ENCODE measurements at regions of chr3 and their contacts with region 1.

Region 1: GRCh38 chr3:71583566-71584449 is at the start of gene FOXP1:
- DNase-seq: peak; percentile 37
- H3K4me3 Mint-ChIP-seq: peak within 1 kb of the TSS; percentile 90
- H3K27ac Mint-ChIP-seq: peak within 1 kb of the TSS; percentile 93
- H3K4me1 Mint-ChIP-seq: peaks cover 47% of the 10 kb centered on the region
- H3K27me3 Mint-ChIP-seq: peaks cover 31% of the 10 kb centered on the region
- total RNA-seq, gene FOXP1: 94.8 and 97.6 TPM in 2 replicates

Region 2: DNA sequence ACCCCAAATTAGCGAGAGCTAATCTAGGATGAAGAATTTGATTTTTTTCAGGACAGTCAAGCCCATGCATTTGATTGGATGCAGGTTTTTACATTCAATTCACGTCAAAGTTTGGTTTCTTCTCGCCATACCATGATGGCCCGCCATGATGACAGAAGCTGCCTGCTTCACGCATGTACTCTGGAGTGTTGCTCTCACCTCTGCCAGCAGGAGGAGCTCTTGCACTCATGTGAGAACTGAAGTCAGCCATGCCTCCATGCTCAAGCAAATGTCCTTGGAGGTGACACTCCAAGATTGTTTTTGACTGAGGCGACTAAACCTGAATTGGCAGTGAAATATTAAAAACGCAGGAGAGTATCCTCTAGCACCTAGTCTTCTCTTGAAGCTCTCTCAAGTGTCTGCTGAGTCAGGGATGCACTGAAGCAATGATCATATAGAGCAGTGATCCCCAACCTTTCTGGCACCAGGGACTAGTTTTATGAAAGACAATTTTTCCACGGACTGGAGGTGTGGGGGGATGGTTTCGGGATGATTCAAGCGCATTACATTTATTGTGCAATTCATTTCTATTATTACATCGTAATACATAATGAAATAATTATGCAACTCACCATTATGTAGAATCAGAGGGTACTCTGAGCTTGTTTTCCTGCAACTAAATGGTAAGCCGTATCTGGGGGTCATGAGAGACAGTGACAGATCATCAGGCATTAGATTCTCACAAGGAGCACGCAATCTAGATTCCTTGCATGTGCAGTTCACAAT is 1463.3 kb before region 1 on chr3:
- intact Hi-C with region 1: loop called (anchors 2 kb)
- DNase-seq: peak; percentile 23
- H3K4me3 Mint-ChIP-seq: no peak overlapping the region
- H3K27ac Mint-ChIP-seq: no peak overlapping the region
- H3K4me1 Mint-ChIP-seq: no peaks in the 10 kb centered on the region
- H3K27me3 Mint-ChIP-seq: peaks cover 2% of the 10 kb centered on the region

Region 3: DNA sequence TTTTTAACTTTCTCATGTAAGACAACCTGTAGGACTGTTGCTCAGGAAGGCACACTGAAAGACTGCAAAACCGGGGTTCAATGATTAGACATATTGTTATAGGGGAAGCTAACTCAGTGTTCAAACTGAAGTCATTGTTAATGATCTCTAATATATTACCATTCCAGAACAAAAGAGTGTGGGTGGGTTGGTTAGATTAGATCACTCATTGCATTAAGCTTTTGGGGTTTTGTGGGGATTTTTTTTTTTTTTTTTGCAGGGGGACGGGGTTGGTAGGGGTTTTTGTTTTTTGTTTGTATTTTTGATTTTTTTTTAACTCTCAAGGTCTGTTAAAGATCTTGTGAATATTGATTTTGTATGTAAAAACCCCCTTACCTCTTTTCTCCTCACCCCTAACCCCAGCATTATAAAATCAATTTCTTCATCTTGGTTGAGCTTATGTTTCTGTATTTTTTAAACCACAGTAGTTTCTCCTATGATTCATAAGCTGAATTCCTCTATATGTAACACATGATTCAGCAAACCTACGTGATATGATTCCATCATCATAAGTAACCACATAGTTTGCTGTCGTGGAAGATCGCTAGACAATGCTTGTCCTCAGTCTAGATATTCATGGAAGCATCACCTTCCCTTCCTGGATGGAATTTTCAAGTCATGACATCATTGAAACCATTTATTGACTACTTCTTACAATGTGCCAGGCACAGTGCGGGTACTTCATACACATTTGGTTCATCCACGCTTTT is 727.2 kb before region 1 on chr3:
- intact Hi-C with region 1: loop called (anchors 5 kb)
- DNase-seq: no peak
- H3K4me3 Mint-ChIP-seq: no peak overlapping the region
- H3K27ac Mint-ChIP-seq: peak overlapping the region; percentile 49
- H3K4me1 Mint-ChIP-seq: peaks cover 22% of the 10 kb centered on the region
- H3K27me3 Mint-ChIP-seq: peaks cover 6% of the 10 kb centered on the region

Region 4: DNA sequence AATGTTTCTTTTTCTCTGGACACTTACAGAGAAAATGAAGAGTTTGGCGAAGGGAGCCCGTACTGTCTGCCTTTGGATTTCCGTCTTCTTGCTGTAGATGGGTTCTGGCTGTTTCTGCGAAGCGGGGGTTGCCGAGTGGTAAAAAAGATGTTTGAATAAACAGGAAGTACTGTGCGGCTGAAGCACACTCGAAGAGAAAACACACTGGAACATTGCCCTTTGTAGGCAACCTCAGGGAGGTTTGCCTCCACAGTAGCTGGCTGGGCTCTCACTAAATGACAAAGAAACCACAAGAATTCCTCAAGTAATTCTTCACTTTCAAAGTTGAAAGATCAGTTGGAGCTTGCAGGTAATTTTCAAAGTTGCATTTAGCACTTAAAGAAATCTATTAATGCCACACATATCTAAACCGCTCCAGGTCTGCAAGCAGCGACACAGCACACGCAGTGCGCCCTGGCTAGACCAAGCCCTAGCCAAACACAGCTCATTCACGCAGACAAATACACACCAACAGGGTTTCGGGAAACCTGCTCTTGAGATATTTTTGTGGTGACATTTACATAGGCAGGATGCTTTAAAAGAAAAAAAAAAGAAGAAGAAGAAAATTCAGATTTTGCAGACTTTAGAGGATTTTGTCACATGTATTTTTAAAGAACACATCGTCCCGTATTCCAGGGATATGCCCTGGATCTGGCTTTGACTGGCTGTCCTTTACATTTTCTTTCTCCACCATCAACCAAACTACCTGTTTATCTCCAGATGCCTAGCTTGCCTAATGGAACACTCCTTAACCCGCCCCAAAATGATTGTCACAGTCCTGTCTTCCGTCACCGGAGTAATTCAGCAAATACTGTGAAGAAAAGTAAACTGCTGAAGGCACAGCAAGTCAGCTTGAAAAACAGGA is 453.1 kb before region 1 on chr3:
- intact Hi-C with region 1: loop called (anchors 1 kb)
- DNase-seq: peak; percentile 67
- H3K4me3 Mint-ChIP-seq: peak overlapping the region; percentile 89
- H3K27ac Mint-ChIP-seq: peak overlapping the region; percentile 93
- H3K4me1 Mint-ChIP-seq: peaks cover 65% of the 10 kb centered on the region
- H3K27me3 Mint-ChIP-seq: no peaks in the 10 kb centered on the region

Region 5: GRCh38 chr3:71369701-71370391 is 214.0 kb before region 1 on chr3:
- intact Hi-C with region 1: no loop called
- DNase-seq: no peak
- H3K4me3 Mint-ChIP-seq: no peak overlapping the region
- H3K27ac Mint-ChIP-seq: no peak overlapping the region
- H3K4me1 Mint-ChIP-seq: peaks cover 10% of the 10 kb centered on the region
- H3K27me3 Mint-ChIP-seq: peaks cover 44% of the 10 kb centered on the region

Region 6: GRCh38 chr3:71389911-71390573 is 193.8 kb before region 1 on chr3:
- intact Hi-C with region 1: loop called (anchors 2 kb)
- DNase-seq: no peak
- H3K4me3 Mint-ChIP-seq: peak overlapping the region; percentile 10
- H3K27ac Mint-ChIP-seq: peak overlapping the region; percentile 27
- H3K4me1 Mint-ChIP-seq: peaks cover 33% of the 10 kb centered on the region
- H3K27me3 Mint-ChIP-seq: peaks cover 18% of the 10 kb centered on the region

Region 7: DNA sequence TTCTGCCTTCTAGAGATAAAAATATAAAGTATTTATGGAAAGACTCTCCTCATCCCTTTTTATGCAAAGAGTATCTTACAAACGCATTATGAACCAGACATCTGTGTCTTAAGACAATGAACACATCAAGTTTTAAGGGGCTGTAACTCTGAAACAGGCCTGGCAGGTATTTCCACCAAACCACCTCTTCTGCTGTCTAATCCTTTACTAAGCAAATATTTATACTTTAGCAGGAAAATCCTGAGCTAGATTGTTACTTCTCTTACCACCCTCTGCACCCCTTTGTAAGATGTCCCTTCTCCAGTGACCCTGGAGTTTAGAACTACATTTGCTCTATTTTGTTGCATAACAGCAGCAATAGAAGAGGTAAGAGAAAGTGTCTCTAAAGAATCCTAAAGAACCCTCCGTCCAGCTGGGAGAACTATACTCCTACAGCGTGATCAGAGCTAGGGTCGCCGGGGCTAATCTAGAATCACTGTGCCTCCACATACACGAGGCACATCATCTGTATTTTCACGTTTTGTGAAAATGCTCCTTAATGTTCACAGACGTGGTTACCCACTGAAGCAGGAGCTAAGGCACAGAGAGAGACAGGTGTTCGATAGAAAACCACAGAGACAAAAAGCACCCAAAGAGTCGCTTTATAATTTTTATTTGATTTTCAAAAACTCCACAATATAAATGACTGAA is 129.8 kb before region 1 on chr3:
- intact Hi-C with region 1: loop called (anchors 5 kb)
- DNase-seq: no peak
- H3K4me3 Mint-ChIP-seq: peak overlapping the region; percentile 61
- H3K27ac Mint-ChIP-seq: peak overlapping the region; percentile 40
- H3K4me1 Mint-ChIP-seq: peaks cover 68% of the 10 kb centered on the region
- H3K27me3 Mint-ChIP-seq: peaks cover 30% of the 10 kb centered on the region